ENCODE measurements at regions of chr2 and their contacts with region 1.

Region 1: DNA sequence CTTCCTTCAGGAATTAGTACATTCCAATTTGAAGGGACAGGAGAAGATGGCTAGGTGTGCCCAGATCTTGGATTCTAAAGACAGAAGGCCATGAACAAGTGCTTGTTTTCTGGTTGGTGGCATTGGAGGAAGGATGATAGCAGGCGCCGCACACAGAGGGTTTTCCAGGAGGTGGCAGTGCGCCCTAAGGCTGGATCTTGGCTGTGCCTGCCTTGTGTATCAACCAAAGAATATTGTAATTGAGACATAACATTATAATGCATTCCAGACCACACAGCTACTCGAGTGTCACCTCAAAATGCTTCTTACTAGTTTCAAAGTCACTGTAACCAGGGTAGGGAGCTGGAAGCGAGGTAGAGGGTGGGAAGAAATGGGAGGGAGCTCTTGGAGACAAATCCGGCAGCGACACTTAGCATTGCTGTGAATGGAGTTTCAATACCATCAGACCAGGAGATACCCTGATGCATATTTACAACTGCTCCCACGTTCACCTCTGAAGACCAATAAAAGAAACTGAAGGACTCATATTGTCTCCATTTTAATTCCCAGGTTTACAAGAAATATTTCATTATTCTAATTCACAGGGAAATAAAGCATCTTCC is 42.5 kb downstream of the CPO start:
- DNase-seq: peak; percentile 72 to 90 (median 87)
- ATAC-seq: peak; percentile 92 to 95
- H3K4me3 ChIP-seq: peak overlapping the region; percentile 18
- H3K27ac ChIP-seq: no peak overlapping the region
- H3K4me1 ChIP-seq: peaks cover 5% of the 10 kb centered on the region
- H3K27me3 ChIP-seq: no peaks in the 10 kb centered on the region

Region 2: GRCh38 chr2:206693399-206694137 is 288.3 kb before region 1 on chr2:
- intact Hi-C with region 1: loop called in 1 of 4 experiments (anchors 10 kb)
- DNase-seq: no peak
- ATAC-seq: peak; percentile 29 to 65
- H3K4me3 ChIP-seq: no peak overlapping the region
- H3K27ac ChIP-seq: no peak overlapping the region
- H3K4me1 ChIP-seq: no peaks in the 10 kb centered on the region
- H3K27me3 ChIP-seq: no peaks in the 10 kb centered on the region

Region 3: DNA sequence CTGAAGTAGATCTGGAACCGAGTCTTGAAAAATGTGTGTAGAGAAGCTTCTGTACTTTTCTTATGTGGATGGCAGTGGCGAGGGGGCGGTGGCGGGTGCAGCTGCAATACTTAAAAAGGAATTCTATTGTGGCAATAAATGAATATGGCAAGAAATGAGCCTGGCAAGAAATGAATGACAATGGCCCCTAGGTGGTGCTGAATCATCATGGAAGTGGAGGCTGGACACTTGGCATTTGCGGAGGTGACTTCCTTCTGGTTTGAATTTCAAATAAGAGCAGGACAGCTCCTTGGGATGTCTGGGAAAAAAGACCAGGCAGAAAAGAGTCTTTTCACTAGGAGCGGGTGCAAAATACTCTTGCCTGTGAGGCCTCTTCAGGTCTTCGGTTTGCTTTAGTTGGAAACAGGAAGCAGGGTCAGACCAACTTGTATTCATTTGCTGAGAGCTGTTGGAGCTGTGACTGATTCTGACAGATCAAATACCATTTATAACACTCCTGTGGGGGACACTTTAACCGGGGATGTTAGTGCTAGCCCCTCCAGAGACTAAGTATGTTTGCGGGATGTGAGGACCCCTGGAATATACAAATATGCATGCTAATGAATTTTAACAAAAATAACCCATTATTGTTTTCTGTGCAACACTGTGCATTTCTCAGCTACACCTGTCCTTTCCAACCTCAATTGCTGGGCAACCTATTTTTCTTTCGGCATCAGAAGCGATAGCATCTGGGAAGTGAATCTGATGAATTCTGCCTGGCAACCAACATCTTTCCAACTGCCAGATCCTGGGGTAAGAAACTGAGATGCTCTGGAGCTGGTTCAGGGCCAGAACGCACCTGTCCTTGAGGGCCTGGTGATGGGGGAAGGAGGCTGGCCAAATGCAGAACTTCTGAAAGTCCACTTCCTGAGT is 181.1 kb before region 1 on chr2:
- intact Hi-C with region 1: loop called (anchors 5 to 10 kb)
- DNase-seq: peak; percentile 57 to 74 (median 57)
- ATAC-seq: peak; percentile 78 to 79
- H3K4me3 ChIP-seq: peak overlapping the region; percentile 15
- H3K27ac ChIP-seq: no peak overlapping the region
- H3K4me1 ChIP-seq: peaks cover 1% of the 10 kb centered on the region
- H3K27me3 ChIP-seq: no peaks in the 10 kb centered on the region

Region 4: GRCh38 chr2:207166039-207166348 is 184.2 kb after region 1 on chr2:
- intact Hi-C with region 1: loop called in 3 of 4 experiments (anchors 10 kb)
- DNase-seq: peak; percentile 99 to 100 (median 99)
- ATAC-seq: peak; percentile 95
- H3K4me3 ChIP-seq: peak overlapping the region; percentile 97
- H3K27ac ChIP-seq: peak overlapping the region; percentile 99
- H3K4me1 ChIP-seq: peaks cover 3% of the 10 kb centered on the region
- H3K27me3 ChIP-seq: no peaks in the 10 kb centered on the region

Region 5: DNA sequence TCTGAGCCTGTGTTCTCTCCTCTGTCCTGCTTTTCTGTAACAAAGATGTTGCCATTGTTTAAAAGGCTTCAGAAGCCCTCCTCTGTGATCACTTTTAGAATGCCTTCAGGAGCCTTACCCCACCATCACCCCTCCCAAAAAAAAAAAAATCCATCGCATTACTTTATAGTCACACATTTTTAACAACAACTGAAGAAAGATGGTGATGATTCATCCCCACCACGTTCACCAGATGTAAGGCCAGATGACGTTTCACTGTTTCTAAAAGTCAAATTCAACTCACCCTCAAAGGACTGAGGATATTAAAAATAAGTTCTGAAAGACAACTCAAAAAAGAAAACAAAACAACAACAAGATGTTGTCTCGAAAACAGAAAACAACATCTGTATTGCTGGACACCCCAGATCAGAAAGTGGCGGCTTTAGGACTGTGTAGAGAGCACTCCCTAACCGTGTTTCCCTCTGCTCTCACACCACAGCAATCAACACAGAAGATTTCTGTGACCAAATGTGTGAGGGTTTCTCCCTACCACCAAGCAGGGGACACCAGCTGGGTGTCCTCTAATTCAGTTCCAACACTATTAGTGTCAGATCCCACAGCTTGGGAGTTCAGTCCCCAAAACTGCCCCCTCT is 486.0 kb after region 1 on chr2:
- intact Hi-C with region 1: loop called in 2 of 4 experiments (anchors 5 kb)
- DNase-seq: no peak
- ATAC-seq: no peak
- H3K4me3 ChIP-seq: no peak overlapping the region
- H3K27ac ChIP-seq: no peak overlapping the region
- H3K4me1 ChIP-seq: no peaks in the 10 kb centered on the region
- H3K27me3 ChIP-seq: no peaks in the 10 kb centered on the region

Region 6: DNA sequence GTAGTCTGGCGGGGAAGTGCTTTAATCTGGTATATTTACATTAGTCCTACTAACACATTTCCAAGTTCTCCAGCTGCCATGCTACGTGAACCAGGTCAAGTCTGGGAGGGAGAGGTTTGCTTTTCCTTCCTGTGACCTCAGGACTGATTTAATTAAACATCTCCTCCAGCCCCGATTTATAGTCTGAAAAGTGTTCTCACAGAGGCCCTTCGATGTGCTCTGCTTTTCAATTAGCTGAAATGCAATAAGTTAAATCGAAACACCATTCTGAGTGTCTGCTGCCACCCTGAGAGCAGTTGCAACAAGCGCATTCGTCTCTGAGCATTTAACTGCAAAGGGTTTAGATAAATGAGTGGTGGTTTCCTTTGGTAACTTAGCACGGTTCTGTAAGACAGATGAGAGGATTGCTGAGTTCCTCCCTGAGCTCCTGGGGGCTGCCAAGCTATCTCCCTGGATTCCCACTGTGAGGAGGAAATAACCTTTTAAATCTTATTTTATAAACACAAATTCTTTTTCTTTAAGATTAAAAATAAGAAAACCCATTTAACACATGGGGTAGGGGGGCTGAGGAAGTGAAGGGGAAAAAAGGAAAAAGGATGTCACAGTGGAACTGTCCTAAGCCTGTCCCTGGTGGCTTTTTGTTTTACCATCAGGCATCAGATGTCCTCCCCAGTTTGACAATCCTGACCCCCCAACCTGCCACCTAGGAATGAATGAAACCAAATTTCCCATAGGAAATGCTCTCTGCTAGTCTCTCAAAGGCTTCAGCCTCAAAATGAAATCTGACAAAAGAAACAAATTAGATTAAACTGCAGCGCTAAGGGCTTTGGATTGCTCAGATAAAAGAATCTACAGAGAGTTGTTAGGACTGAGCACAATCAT is 491.4 kb after region 1 on chr2:
- intact Hi-C with region 1: loop called (anchors 2 to 5 kb)
- DNase-seq: peak in 2 of 3 donors; percentile 33 to 50
- ATAC-seq: peak; percentile 83 to 89
- H3K4me3 ChIP-seq: no peak overlapping the region
- H3K27ac ChIP-seq: no peak overlapping the region
- H3K4me1 ChIP-seq: no peaks in the 10 kb centered on the region
- H3K27me3 ChIP-seq: no peaks in the 10 kb centered on the region